ENCODE measurements at regions of chr19 and their contacts with region 1.

Region 1: GRCh38 chr19:33406521-33407139 is 33.1 kb downstream of the CEBPG start:
- DNase-seq: peak; percentile 20
- H3K4me3 ChIP-seq: no peak overlapping the region
- H3K27ac ChIP-seq: no peak overlapping the region
- H3K4me1 ChIP-seq: peaks cover 0 to 29% (median 0%) of the 10 kb centered on the region in 3 donors
- H3K27me3 ChIP-seq: no peaks in the 10 kb centered on the region
- CTCF ChIP-seq: peak; percentile 87 to 97 (median 96)
- POLR2A ChIP-seq: no peak

Region 2: GRCh38 chr19:33235269-33235995 is 171.2 kb before region 1 on chr19:
- intact Hi-C with region 1: loop called (anchors 2 kb)
- DNase-seq: no peak
- H3K4me3 ChIP-seq: peak overlapping the region in 1 of 4 donors; percentile 37
- H3K27ac ChIP-seq: no peak overlapping the region
- H3K4me1 ChIP-seq: peaks cover 0 to 5% (median 0%) of the 10 kb centered on the region in 3 donors
- H3K27me3 ChIP-seq: peaks cover 0 to 38% (median 0%) of the 10 kb centered on the region in 4 donors
- CTCF ChIP-seq: peak; percentile 72 to 95 (median 92)
- POLR2A ChIP-seq: no peak

Region 3: DNA sequence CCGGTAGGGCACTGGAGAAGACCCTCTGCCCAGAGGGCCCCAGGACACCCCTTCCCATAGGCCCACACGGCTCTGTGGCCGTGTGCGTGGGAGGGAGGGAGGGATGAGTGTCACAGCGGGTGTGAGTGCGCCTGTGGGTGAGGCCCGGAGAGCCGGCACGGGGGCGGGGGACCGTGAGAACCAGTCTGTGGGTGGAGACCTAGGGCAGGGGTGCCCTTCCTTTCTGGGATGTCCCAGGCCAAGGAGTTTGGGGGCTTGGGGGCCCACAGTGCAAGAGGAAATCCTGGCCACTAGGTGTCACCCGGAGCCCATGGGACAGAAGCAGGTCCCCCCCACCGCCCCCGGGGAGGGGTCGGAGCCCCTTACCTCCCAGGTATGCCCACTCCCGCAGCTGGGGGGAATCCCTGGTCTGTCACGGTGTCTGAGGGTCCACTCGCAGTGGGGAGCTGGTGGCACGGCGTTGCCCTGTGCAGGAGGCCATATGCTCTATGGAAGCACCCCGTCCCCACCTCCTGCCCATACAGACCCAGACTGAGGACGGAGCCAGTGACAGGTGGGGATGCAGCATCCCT is 165.0 kb before region 1 on chr19:
- intact Hi-C with region 1: loop called (anchors 2 kb)
- DNase-seq: no peak
- H3K4me3 ChIP-seq: peak overlapping the region in 1 of 4 donors; percentile 12
- H3K27ac ChIP-seq: no peak overlapping the region
- H3K4me1 ChIP-seq: peaks cover 6 to 13% (median 8%) of the 10 kb centered on the region in 3 donors
- H3K27me3 ChIP-seq: no peaks in the 10 kb centered on the region
- CTCF ChIP-seq: peak; percentile 41 to 84 (median 70)
- POLR2A ChIP-seq: no peak

Measured in esophagus squamous epithelium (tissue), 5 donors.